ENCODE measurements at regions of chr16 and their contacts with region 1.

Region 1: DNA sequence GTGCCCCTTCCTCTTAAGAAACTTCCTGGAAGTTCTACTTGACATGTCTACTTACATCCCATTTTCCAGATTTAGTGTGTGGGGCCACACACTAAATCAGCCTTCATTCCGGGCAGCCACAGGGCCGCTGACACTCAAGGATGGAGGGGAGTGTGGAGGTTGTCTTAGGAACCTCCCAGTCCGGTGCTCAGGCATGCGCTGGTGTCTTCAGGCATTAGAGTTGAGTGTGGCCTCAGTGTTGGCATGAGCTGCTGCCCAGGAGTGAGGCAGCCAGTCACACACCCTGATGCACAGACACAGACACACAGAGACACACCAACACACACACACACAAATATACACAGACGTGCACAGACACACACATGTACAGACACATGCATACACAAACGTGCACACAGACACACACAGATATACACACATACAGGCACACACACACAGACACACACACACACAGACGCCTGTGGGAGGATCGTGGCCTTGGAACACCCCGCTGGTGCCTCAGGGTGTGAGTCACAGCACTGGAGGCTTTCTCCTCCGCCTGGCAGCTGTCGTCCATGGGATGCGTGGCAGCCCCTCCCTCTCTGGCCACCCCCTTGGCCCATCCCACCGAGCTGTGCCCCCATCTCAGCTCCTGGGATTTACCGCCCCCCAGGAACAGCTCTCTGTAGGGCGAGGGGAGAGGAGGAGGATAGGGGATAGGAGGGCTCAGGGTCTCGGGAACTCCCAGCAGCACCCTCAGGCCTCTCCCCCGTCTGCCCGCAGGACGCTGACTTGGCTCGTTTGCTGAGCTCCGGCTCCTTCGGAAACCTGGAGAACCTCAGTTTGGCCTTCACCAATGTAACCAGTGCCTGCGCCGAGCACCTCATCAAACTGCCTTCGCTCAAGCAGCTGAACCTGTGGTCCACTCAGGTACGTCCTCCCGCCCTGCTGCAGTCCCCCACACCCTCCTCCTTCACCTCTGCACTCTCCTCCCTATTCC is 75.6 kb upstream of the PLCG2 start:
- DNase-seq: peak; percentile 84

Region 2: DNA sequence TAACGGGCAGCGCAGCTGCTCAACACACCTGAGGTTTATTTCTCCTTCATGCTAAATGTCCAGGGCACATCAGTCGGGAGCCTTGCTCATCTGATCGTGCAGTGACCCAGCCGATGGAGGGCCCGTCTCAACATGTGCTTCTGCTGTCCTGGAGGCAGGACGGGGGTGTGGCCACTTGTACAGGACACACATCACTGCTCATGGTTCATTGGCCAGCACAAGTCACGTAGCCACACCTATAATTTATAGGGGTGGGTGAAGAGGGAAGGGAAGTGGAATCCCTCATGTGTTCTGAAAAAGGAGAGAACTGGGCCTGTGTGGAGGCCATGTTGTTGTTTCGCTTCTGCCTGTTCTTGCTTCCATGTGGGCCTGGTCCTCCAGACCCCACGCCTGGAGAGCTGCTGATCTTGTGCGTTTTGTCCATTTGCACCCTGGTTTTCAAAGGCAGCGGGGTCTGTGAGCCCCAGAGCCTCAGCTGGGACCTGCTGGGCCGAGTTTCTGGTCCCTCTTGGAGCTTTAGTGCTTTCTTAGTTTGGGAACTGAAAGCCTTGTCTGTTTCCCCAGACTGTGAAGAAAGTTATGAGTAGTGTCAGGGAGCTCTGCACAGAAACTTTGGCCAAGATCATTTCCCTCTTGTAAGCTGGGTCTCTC is 198.3 kb before region 1 on chr16:
- intact Hi-C with region 1: loop called in 1 of 2 experiments (anchors 10 kb)
- DNase-seq: no peak